ENCODE measurements at regions of chr20 and their contacts with region 1.

Region 1: DNA sequence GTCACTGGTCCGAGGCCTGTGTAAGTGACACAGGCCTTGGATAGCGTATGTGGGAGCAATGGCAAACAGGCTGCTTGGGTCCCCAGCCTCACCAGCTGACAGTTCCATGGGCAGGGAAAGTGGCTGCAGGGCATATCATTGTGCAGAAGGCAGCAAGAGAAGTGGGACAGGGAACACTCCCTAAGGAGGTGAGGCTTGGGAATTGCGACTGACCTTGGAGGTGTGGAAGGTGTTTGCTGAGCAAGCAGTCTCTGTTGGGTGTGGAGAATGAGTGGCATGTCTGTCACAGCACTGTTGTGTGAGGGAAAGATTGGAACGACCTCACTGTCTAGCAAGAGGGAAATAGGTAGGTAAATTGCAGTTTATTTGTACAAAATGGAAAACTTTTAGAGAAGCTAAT is 16.8 kb downstream of the POFUT1 start:
- DNase-seq: no peak
- ATAC-seq: no peak
- H3K4me3 ChIP-seq: no peak overlapping the region
- H3K27ac ChIP-seq: no peak overlapping the region
- H3K4me1 ChIP-seq: peaks cover 9% of the 10 kb centered on the region; the same call in 1 of the 2 replicates
- H3K27me3 ChIP-seq: no peaks in the 10 kb centered on the region
- CTCF ChIP-seq: no peak
- EP300 ChIP-seq: no peak
- POLR2A ChIP-seq: no peak
- RAD21 ChIP-seq: no peak

Region 2: DNA sequence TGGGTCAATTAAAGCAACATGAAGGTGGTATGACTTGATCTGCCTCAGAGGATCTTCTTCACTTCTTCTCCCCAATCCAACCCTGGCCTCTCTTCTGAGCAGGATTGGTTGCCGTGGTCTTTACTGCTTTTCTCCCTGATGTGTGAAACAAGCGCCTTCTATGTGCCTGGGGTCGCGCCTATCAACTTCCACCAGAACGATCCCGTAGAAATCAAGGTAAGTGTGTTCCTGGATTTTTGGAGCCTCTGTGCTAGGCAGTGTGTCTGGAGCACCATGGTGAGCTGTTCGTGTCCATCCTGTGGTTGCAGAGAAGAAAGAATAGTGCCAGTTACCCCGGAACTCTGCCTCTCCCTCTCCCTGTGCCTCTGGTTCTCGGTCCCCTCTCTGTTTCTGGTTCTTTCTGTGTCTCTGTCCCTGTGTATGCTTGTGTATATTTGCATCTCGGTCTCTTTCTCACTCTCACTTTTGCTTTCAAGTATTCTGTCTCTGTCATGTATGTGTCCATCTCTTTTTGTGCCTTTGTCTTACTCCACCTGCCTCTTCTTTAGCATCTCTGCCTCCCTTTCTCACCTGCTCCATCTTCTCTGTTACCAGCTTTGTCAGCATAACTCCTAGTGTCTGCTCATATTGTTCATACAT is 91.4 kb before region 1 on chr20:
- CTCF ChIA-PET with region 1: no interaction called
- POLR2A ChIA-PET with region 1: no interaction called
- in situ Hi-C with region 1: no loop called
- intact Hi-C with region 1: no loop called
- DNase-seq: no peak
- ATAC-seq: no peak
- H3K4me3 ChIP-seq: no peak overlapping the region
- H3K27ac ChIP-seq: no peak overlapping the region
- H3K4me1 ChIP-seq: peaks cover 8% of the 10 kb centered on the region
- H3K27me3 ChIP-seq: no peaks in the 10 kb centered on the region
- CTCF ChIP-seq: no peak
- EP300 ChIP-seq: no peak
- POLR2A ChIP-seq: no peak
- RAD21 ChIP-seq: no peak

Region 3: DNA sequence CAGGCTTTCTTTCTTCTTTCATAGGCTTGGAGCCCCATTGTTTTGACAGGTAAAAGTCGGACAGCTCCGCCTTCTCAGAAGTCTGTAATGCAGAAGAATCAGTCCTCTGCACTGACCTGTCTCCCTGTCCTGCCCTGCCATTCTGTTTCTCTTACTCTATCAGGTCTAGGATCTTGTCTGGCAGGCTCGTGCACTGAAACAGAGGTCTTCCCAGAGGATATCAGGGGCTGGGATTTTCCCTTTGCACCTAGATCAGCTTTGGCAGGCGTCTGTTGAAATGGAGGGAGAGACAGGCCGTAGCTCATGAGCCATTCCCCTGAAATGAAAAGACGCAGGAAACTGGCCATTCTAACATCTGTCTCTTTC is 78.0 kb after region 1 on chr20:
- CTCF ChIA-PET with region 1: no interaction called
- POLR2A ChIA-PET with region 1: no interaction called
- in situ Hi-C with region 1: no loop called
- intact Hi-C with region 1: no loop called
- DNase-seq: peak; percentile 27
- ATAC-seq: peak; percentile 46
- H3K4me3 ChIP-seq: no peak overlapping the region
- H3K27ac ChIP-seq: no peak overlapping the region
- H3K4me1 ChIP-seq: peaks cover 41% of the 10 kb centered on the region
- H3K27me3 ChIP-seq: no peaks in the 10 kb centered on the region
- CTCF ChIP-seq: no peak
- EP300 ChIP-seq: no peak
- POLR2A ChIP-seq: no peak
- RAD21 ChIP-seq: no peak

Region 4: GRCh38 chr20:32592022-32592421 is 367.6 kb after region 1 on chr20:
- CTCF ChIA-PET with region 1: no interaction called
- POLR2A ChIA-PET with region 1: no interaction called
- in situ Hi-C with region 1: no loop called
- intact Hi-C with region 1: loop called (anchors 5 kb)
- DNase-seq: no peak
- ATAC-seq: no peak
- H3K4me3 ChIP-seq: no peak overlapping the region
- H3K27ac ChIP-seq: no peak overlapping the region
- H3K4me1 ChIP-seq: peaks cover 9% of the 10 kb centered on the region; the same call in 1 of the 2 replicates
- H3K27me3 ChIP-seq: peaks cover 27 to 82% of the 10 kb centered on the region in 2 experiments; a peak in 4 of 5 replicates
- CTCF ChIP-seq: no peak
- EP300 ChIP-seq: no peak
- POLR2A ChIP-seq: no peak
- RAD21 ChIP-seq: no peak

Measured in HepG2 (cell line).